ENCODE measurements at regions of chr10 and their contacts with region 1.

Region 1: GRCh38 chr10:87861953-87862678 is 1.2 kb downstream of the KLLN start:
- DNase-seq: peak; percentile 93
- H3K4me3 ChIP-seq: peak overlapping the region; percentile 50 to 78 (median 65)
- H3K27ac ChIP-seq: peak overlapping the region; percentile 3
- H3K4me1 ChIP-seq: peaks cover 4% of the 10 kb centered on the region
- H3K27me3 ChIP-seq: no peaks in the 10 kb centered on the region
- CTCF ChIP-seq: no peak
- POLR2A ChIP-seq: peak; percentile 79

Region 2: DNA sequence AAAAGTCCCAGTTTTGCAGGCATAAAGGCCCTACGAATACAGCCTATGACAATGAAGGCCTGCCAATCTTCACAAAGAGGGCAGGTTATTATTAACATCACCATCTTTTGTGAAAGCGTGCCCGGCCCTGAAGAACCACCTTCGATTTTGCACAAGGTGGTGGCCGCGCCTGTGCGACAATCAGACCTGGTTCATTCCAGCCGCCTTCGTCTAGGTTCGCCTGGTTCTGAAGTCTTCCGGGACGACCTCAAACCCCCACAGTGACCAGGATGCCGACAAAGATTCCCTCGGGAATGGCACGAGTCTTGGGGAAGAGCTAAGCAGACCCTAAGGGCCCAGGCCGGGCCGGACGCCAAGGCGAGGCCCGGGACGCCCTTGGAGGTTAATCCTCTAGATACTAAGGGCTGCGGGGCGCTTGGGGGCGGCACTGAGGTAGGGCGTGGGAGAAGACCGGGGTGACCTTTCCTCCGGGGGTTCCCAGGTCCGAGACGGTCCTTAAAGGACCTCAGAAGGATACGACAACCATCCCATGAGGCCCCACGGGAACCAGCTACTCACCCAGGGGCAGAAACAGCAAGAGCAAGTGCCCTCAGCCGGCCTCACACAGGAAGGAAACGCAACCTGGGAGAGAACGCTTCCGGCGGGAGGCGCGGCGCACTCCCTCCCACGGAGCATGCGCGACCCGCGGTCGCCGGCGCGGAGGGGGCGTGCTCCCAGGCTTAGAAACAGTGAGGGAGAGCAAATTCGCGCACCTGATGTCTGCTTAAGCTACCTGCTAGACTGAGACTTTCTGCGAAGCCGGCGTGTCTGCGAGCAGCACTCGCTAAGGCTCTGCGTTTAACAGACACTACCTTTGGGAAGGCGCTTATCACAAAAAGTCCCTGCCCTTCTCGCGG is 44.3 kb before region 1 on chr10 and contains the start of gene ATAD1:
- CTCF ChIA-PET with region 1: interaction called, 5 read pairs
- POLR2A ChIA-PET with region 1: no interaction called
- dilution Hi-C with region 1: no loop called
- intact Hi-C with region 1: loop called (anchors 1 kb)
- DNase-seq: peak; percentile 80
- H3K4me3 ChIP-seq: peak within 1 kb of the TSS; percentile 61 to 88 (median 78)
- H3K27ac ChIP-seq: peak within 1 kb of the TSS; percentile 68
- H3K4me1 ChIP-seq: peaks cover 22% of the 10 kb centered on the region
- H3K27me3 ChIP-seq: no peaks in the 10 kb centered on the region
- CTCF ChIP-seq: peak in 1 of 2 donors; percentile 5
- POLR2A ChIP-seq: peak; percentile 77
- total RNA-seq, gene ATAD1: 23.6 and 25.8 TPM in 2 replicates

Region 3: GRCh38 chr10:87927091-87927490 is 65.0 kb after region 1 on chr10:
- CTCF ChIA-PET with region 1: no interaction called
- POLR2A ChIA-PET with region 1: no interaction called
- dilution Hi-C with region 1: no loop called
- intact Hi-C with region 1: loop called (anchors 2 kb)
- DNase-seq: peak; percentile 58
- H3K4me3 ChIP-seq: peak overlapping the region in 1 of 3 experiments; percentile 12
- H3K27ac ChIP-seq: peak overlapping the region; percentile 15
- H3K4me1 ChIP-seq: peaks cover 53% of the 10 kb centered on the region
- H3K27me3 ChIP-seq: no peaks in the 10 kb centered on the region
- CTCF ChIP-seq: no peak
- POLR2A ChIP-seq: no peak

Region 4: GRCh38 chr10:88114368-88114767 is 252.3 kb after region 1 on chr10:
- CTCF ChIA-PET with region 1: interaction called, 86 read pairs
- POLR2A ChIA-PET with region 1: no interaction called
- dilution Hi-C with region 1: no loop called
- intact Hi-C with region 1: loop called (anchors 1 kb)
- DNase-seq: peak; percentile 51
- H3K4me3 ChIP-seq: no peak overlapping the region
- H3K27ac ChIP-seq: no peak overlapping the region
- H3K4me1 ChIP-seq: no peaks in the 10 kb centered on the region
- H3K27me3 ChIP-seq: no peaks in the 10 kb centered on the region
- CTCF ChIP-seq: peak; percentile 42 to 71
- POLR2A ChIP-seq: no peak

Region 5: GRCh38 chr10:88318803-88319202 is 456.7 kb after region 1 on chr10:
- CTCF ChIA-PET with region 1: interaction called, 3 read pairs
- POLR2A ChIA-PET with region 1: no interaction called
- dilution Hi-C with region 1: no loop called
- intact Hi-C with region 1: loop called (anchors 2 kb)
- DNase-seq: no peak
- H3K4me3 ChIP-seq: no peak overlapping the region
- H3K27ac ChIP-seq: no peak overlapping the region
- H3K4me1 ChIP-seq: no peaks in the 10 kb centered on the region
- H3K27me3 ChIP-seq: no peaks in the 10 kb centered on the region
- CTCF ChIP-seq: peak in 1 of 2 donors; percentile 10
- POLR2A ChIP-seq: no peak

Measured in endothelial cell of umbilical vein (primary cell).